ENCODE measurements at regions of chr15 and their contacts with region 1.

Region 1: DNA sequence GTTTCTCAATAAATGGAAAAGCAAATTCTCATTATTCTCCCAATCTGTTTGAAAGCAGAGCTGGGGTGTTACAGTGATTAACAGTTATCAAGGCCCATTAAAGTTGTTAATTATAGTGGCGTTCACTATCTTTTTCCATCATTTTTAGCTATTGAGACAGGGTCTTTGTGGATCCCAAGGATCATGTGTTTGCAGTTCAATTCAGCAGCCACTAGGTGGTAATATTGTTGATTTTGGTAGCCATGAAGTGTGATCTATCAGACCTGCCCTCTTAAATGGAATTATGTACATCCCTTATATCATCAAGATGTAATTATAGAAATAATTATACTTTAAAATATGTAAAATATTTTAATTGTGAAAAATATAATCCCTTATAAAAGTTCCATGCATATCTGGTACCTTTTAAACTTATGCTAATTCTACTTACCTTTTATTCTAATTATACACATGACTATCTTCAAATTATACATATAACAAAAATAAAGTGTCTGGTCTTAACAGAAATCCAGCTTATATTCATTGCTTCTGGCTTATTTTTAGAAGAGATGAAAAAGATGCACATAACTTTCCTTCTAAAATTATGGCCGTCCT is 126.4 kb downstream of the GREM1 start:
- DNase-seq: no peak
- H3K4me3 ChIP-seq: no peak overlapping the region
- H3K27ac ChIP-seq: no peak overlapping the region
- H3K4me1 ChIP-seq: no peaks in the 10 kb centered on the region
- H3K27me3 ChIP-seq: no peaks in the 10 kb centered on the region
- CTCF ChIP-seq: peak; percentile 61

Region 2: GRCh38 chr15:32683906-32684584 is 160.2 kb before region 1 on chr15:
- intact Hi-C with region 1: no loop called
- DNase-seq: no peak
- H3K4me3 ChIP-seq: no peak overlapping the region
- H3K27ac ChIP-seq: no peak overlapping the region
- H3K4me1 ChIP-seq: no peaks in the 10 kb centered on the region
- H3K27me3 ChIP-seq: no peaks in the 10 kb centered on the region
- CTCF ChIP-seq: no peak

Region 3: DNA sequence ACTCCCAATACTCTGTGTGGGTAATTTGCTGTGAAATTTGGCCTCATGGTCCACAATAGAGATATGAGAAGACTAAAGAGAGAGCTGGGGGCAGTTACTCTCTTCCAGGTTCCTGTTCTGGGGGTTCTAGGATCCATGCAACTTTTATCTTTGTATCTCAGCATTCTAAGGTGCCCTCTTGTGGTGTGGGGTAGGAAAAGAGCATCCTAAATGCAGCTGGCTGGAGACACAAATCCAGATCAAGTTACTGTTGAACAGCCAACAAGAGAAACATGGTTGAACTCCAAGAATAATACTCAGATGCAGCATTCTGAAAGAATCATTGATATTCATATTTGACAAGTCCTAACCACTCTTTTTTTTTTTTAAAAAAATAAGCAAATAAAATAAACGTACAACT is 111.8 kb after region 1 on chr15:
- intact Hi-C with region 1: loop called (anchors 10 kb)
- DNase-seq: no peak
- H3K4me3 ChIP-seq: no peak overlapping the region
- H3K27ac ChIP-seq: no peak overlapping the region
- H3K4me1 ChIP-seq: no peaks in the 10 kb centered on the region
- H3K27me3 ChIP-seq: no peaks in the 10 kb centered on the region
- CTCF ChIP-seq: no peak

Region 4: GRCh38 chr15:32993285-32993684 is 149.1 kb after region 1 on chr15:
- intact Hi-C with region 1: no loop called
- DNase-seq: no peak
- H3K4me3 ChIP-seq: no peak overlapping the region
- H3K27ac ChIP-seq: no peak overlapping the region
- H3K4me1 ChIP-seq: no peaks in the 10 kb centered on the region
- H3K27me3 ChIP-seq: no peaks in the 10 kb centered on the region
- CTCF ChIP-seq: no peak

Measured in colonic mucosa (tissue), 4 donors.